Astrocyte of the cerebellum (primary cell): ENCODE measurements at regions of chr9 and their contacts with region 1.

Region 1: DNA sequence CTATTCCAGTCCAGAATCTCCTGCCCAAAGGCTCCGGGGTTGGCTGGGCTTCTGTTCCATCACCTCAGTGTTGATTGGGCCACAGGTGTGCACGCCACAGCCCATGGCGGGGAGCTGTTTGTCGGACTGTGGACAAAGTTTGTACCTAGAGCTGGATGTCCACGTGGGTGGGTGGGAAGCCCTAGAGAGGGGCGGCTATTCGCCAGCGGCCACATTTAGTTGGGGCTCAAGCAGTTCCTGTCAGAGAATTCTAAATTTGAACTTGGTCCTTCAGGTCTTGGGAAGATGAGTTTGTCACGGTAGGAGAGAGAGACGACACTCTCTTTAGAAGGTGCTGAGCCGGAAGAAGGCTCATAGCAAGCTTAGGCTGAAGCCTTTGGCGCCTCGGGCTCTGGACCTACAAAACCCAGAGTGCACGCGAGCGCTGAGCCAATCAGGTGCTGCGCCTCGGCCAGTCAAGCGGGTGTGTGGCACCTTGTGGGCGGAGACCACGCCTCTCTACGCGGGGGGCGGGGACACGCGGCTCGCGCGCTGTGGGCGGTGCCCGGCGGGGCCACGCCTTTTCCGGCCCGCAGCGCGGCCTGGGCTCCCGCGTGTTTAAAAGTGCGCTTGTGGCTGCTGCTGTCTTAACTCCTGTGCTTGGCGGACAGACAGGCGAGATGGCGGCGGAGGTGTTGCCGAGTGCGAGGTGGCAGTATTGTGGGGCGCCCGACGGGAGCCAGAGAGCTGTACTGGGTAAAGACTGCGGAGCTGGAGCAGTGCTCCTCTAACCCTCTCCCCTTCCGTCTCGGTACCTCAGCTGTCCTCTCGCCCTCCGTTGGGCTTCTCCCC is at the start of gene POLR1E:
- DNase-seq: peak; percentile 73
- H3K4me3 ChIP-seq: peak within 1 kb of the TSS; percentile 89
- CTCF ChIP-seq: no peak

Region 2: GRCh38 chr9:37437621-37438020 is 48.0 kb before region 1 on chr9:
- in situ Hi-C with region 1: no loop called
- DNase-seq: no peak
- H3K4me3 ChIP-seq: no peak overlapping the region
- CTCF ChIP-seq: no peak

Region 3: DNA sequence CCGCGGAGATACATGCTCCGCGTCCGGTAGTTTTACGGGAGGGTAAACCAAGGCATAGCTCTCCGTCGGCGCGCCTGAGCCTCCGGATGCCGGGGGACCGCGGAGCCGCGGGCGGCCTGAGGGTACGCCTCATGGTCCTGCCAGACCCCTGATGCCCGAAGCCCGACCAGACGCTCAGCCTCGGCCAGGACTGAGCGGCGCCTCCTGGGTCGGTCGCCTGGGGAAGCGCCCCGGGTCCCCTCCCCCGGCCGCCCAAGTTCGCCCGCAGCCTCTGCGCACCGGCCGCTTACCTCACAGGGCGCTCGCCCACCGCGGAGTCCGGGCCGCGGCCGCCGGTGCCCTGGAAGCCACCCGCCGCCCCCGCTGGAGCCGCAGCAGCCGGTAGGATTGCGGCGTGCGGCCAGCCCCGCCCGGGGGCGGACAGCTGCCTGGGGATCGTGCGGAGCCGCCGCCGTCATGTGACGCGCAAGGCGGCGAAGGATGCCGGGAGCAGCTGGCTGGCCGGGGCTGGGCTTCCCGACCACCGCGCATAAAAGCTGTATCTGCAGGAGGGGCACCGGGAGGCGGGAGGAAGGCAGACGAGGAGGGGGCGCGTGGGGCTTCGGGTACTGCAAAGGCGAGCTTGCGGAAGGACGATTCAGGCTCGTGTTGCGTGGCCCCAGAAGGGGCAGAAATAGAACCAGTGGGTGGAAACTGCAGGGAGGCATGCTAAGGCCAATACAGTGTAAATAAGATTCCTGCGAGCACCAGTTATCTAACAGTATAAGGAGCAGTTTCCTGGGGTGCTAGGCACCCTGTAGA is 90.5 kb after region 1 on chr9 and contains the start of gene FBXO10:
- in situ Hi-C with region 1: loop called (anchors 5 kb)
- DNase-seq: peak; percentile 18
- H3K4me3 ChIP-seq: peak within 1 kb of the TSS; percentile 80
- CTCF ChIP-seq: no peak